B cell (primary cell): ENCODE measurements at regions of chr9 and their contacts with region 1.

Region 1: DNA sequence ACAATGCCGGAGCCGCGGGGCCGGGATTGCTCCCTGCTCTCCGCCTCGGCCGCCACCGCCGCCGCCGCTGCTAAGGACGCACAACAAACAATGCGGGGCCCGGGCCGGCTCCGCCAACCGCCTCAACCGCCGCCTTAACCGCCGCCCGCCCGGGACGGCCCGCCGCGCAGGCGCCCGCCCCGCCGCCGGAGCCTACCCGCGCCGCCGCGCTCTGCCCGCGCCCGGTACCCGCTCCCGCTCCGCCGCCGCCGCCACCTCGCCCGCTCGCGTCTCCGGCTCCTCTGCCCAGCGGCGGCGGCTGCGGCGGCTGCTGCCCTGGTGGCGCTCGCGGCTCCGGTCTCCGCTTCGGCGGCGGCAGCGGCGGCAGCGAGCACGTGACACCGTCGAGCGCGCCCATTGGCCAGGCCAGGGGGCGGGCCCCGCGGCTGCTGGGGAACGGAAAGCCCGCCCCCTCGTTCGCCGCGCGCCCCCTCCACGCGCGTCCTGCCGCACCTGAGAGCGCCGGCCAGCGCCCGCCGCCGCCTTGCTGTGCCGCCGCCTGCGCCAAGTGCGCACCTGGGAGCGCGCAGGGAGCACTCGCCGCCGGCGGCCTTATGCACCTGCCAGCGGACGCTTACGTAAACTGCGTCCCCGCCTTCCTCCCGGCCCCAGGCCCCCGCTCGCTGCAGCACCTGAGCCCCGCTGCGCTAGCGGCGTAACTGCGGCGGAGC is at the start of gene STRBP:
- DNase-seq: peak; percentile 99
- ATAC-seq: peak; percentile 91
- H3K4me3 ChIP-seq: peak within 1 kb of the TSS; percentile 55 to 95 (median 79)
- H3K4me3 Mint-ChIP-seq: peak within 1 kb of the TSS; percentile 91
- H3K27ac ChIP-seq: peak within 1 kb of the TSS; percentile 84 to 93
- H3K27ac Mint-ChIP-seq: peak within 1 kb of the TSS; percentile 89
- H3K4me1 ChIP-seq: peaks cover 41 to 51% of the 10 kb centered on the region in 2 donors
- H3K4me1 Mint-ChIP-seq: peaks cover 46% of the 10 kb centered on the region
- H3K27me3 ChIP-seq: no peaks in the 10 kb centered on the region
- H3K27me3 Mint-ChIP-seq: no peaks in the 10 kb centered on the region
- CTCF ChIP-seq: no peak
- total RNA-seq, gene STRBP: 189 and 197 TPM in 2 replicates

Region 2: DNA sequence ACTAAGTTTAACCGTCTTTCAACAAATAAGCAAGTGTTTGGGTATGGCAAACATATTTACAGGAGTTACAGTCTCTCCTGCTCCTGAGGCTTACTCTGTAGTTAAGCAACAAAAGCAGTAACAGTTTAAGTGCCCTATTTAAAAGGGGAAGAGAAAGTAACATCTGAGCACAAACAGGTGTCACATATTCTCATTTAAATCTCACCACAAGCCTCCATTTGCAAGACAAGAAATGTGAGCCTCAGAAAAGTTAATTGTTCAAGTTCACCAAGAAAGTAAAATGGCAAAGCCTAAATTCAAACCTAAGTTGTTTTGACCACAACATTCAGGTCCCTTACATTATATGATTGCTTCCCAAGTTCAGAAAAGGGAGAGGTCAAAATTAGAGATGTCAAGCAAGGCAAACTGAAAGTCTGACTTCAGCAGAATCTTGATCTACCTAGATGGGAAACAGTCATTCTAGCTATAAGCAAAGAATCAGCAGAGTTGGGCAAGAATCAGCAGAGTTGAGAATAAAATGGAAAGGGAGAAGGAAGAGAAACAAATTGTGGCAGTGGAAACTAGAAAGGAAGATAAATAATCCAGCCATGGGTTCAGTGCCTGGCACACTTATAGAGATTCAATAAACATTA is 93.4 kb before region 1 on chr9:
- CTCF ChIA-PET with region 1: no interaction called
- POLR2A ChIA-PET with region 1: no interaction called
- intact Hi-C with region 1: loop called (anchors 5 kb)
- DNase-seq: peak; percentile 83
- ATAC-seq: peak; percentile 91
- H3K4me3 ChIP-seq: peak overlapping the region in 1 of 5 experiments; percentile 53
- H3K4me3 Mint-ChIP-seq: peak overlapping the region; percentile 76
- H3K27ac ChIP-seq: peak overlapping the region; percentile 85 to 96
- H3K27ac Mint-ChIP-seq: peak overlapping the region; percentile 93
- H3K4me1 ChIP-seq: peaks cover 50 to 54% of the 10 kb centered on the region in 2 donors
- H3K4me1 Mint-ChIP-seq: peaks cover 74% of the 10 kb centered on the region
- H3K27me3 ChIP-seq: no peaks in the 10 kb centered on the region
- H3K27me3 Mint-ChIP-seq: no peaks in the 10 kb centered on the region
- CTCF ChIP-seq: no peak

Region 3: GRCh38 chr9:123302348-123303214 is 34.2 kb after region 1 on chr9:
- CTCF ChIA-PET with region 1: interaction called, 3 read pairs
- POLR2A ChIA-PET with region 1: no interaction called
- intact Hi-C with region 1: loop called (anchors 5 kb)
- DNase-seq: no peak
- ATAC-seq: no peak
- H3K4me3 ChIP-seq: no peak overlapping the region
- H3K4me3 Mint-ChIP-seq: no peak overlapping the region
- H3K27ac ChIP-seq: no peak overlapping the region
- H3K27ac Mint-ChIP-seq: no peak overlapping the region
- H3K4me1 ChIP-seq: peaks cover 17 to 20% of the 10 kb centered on the region in 2 donors
- H3K4me1 Mint-ChIP-seq: peaks cover 14% of the 10 kb centered on the region
- H3K27me3 ChIP-seq: no peaks in the 10 kb centered on the region
- H3K27me3 Mint-ChIP-seq: no peaks in the 10 kb centered on the region
- CTCF ChIP-seq: no peak

Region 4: GRCh38 chr9:123322273-123323195 is 54.1 kb after region 1 on chr9:
- CTCF ChIA-PET with region 1: interaction called, 3 read pairs
- POLR2A ChIA-PET with region 1: interaction called, 4 read pairs
- intact Hi-C with region 1: loop called (anchors 1 kb)
- DNase-seq: peak; percentile 76
- ATAC-seq: peak; percentile 79
- H3K4me3 ChIP-seq: peak overlapping the region in 4 of 5 experiments; percentile 1 to 41 (median 34)
- H3K4me3 Mint-ChIP-seq: peak overlapping the region; percentile 66
- H3K27ac ChIP-seq: peak overlapping the region; percentile 73 to 86
- H3K27ac Mint-ChIP-seq: peak overlapping the region; percentile 89
- H3K4me1 ChIP-seq: peaks cover 70 to 85% of the 10 kb centered on the region in 2 donors
- H3K4me1 Mint-ChIP-seq: peaks cover 86% of the 10 kb centered on the region
- H3K27me3 ChIP-seq: no peaks in the 10 kb centered on the region
- H3K27me3 Mint-ChIP-seq: no peaks in the 10 kb centered on the region
- CTCF ChIP-seq: no peak